Mammary epithelial cell (primary cell): ENCODE measurements at regions of chr16 and their contacts with region 1.

Region 1: DNA sequence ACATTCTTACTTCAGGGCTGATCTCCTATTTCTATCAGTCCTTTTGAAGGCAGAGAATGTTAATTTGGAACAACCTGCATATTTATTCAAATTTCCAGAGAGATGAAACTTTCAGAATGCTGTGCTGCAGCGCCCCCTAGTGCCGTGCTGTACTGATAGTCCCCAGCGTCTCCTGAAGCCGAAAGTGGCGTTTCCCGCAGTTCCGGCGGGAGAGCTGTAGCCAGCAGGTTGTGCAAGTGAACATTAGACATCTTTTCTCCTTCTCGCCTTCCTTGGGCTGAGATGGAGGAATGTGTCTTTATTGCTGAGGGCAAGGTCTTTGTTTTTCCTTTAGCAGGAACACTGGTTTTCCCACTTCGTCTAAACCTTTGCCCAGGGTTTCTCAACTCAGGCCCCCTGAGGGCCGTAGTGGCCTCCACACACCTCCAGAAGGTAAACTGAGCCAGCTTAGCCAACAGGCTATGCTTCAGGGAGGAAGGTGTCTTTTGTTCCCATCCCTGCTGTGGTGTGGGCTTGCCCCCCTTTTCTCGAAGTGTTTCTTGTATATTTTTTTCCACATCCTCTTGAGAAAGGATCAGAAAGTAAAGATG is 26.4 kb downstream of the USP10 start:
- DNase-seq: peak; percentile 70
- H3K4me3 ChIP-seq: peak overlapping the region in 1 of 3 experiments; percentile 3
- H3K27ac ChIP-seq: peak overlapping the region; percentile 50
- H3K4me1 ChIP-seq: peaks cover 31% of the 10 kb centered on the region
- H3K27me3 ChIP-seq: no peaks in the 10 kb centered on the region
- CTCF ChIP-seq: peak; percentile 91 to 92

Region 2: DNA sequence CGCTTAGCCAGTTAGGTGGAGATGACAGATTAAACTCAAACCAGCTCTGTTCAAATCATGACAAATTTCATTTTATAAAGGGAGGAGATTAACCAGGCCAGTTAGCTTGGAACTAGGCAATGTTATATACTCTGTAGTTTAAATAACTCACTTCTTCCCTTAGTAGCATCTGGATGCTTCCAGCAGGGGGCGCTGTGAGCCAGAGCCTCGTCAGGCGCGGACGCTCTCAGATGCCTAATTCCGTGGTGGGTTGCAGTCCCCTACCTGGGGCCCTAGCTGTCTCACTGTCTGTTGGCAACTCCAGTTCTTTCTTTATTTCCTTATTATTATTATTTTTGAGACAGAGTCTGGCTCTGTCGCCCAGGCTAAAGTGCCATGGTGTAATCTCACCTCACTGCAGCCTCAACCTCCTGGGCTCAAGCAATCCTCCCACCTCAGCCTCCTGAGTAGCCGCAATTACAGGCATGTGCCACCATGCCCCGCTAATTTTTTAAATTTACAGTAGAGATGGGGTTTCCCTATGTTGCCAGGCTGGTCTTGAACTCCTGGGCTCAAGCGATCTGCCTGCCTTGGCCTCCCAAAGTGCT is 448.8 kb before region 1 on chr16:
- CTCF ChIA-PET with region 1: no interaction called
- dilution Hi-C with region 1: no loop called
- in situ Hi-C with region 1: no loop called
- intact Hi-C with region 1: loop called (anchors 5 kb)
- DNase-seq: peak; percentile 8
- H3K4me3 ChIP-seq: no peak overlapping the region
- H3K27ac ChIP-seq: no peak overlapping the region
- H3K4me1 ChIP-seq: no peaks in the 10 kb centered on the region
- H3K27me3 ChIP-seq: no peaks in the 10 kb centered on the region
- CTCF ChIP-seq: peak; percentile 84 to 87

Region 3: GRCh38 chr16:84511180-84511824 is 214.9 kb before region 1 on chr16:
- CTCF ChIA-PET with region 1: no interaction called
- dilution Hi-C with region 1: no loop called
- in situ Hi-C with region 1: loop called (anchors 10 to 25 kb)
- intact Hi-C with region 1: loop called (anchors 1 kb)
- DNase-seq: peak; percentile 72
- H3K4me3 ChIP-seq: no peak overlapping the region
- H3K27ac ChIP-seq: no peak overlapping the region
- H3K4me1 ChIP-seq: peaks cover 4% of the 10 kb centered on the region
- H3K27me3 ChIP-seq: no peaks in the 10 kb centered on the region
- CTCF ChIP-seq: peak; percentile 90 to 94

Region 4: GRCh38 chr16:84647828-84648594 is 78.2 kb before region 1 on chr16 and contains the start of gene KLHL36:
- CTCF ChIA-PET with region 1: no interaction called
- dilution Hi-C with region 1: no loop called
- in situ Hi-C with region 1: no loop called
- intact Hi-C with region 1: no loop called
- DNase-seq: no peak
- H3K4me3 ChIP-seq: peak within 1 kb of the TSS; percentile 53 to 75 (median 62)
- H3K27ac ChIP-seq: peak within 1 kb of the TSS; percentile 43
- H3K4me1 ChIP-seq: peaks cover 46% of the 10 kb centered on the region
- H3K27me3 ChIP-seq: no peaks in the 10 kb centered on the region
- CTCF ChIP-seq: no peak
- total RNA-seq, gene KLHL36: 52.9 to 103 TPM

Region 5: DNA sequence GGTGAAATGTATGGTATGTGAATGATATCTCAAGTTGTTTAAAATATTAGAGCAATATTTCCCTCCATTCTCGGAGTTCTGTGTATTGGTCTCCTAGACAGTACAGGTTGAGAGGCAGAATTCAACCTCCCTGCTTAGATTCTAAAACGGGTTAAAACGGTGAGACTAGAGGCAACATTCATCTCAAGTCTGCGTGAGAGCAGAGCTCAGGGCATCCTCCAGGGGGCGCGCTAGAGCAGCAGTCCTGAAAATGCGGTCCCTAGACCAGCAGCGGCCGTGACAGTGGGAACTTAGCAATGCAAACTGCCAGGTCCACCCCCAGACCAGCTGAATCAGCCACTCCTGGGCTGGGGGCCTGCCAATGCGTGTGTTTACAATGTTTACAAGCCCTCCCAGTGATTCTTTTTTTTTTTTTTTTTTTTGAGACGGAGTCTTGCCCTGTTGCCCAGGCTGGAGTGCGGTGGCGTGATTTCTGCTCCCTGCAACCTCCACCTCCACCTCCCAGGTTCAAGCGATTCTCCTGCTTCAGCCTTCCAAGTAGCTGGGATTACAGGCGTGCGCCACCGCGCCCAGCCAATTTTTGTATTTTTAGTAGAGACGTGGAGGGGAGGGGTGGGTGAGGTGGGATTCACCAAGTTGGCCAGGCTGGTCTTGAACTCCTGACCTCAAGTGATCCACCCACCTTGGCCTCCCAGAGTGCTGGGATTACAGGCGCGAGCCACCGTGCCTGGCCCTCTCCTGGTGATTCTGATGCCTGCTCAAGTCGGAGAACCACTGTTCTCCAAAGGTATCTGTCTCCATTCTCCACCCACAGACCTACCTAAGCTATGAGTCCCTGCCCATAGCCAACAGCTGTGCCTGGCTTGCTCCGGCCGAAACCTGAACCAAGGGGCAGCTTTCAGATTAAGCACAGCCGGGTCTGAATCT is 53.6 kb before region 1 on chr16:
- CTCF ChIA-PET with region 1: interaction called, 3 read pairs
- dilution Hi-C with region 1: no loop called
- in situ Hi-C with region 1: no loop called
- intact Hi-C with region 1: loop called (anchors 1 kb)
- DNase-seq: peak; percentile 39
- H3K4me3 ChIP-seq: no peak overlapping the region
- H3K27ac ChIP-seq: no peak overlapping the region
- H3K4me1 ChIP-seq: no peaks in the 10 kb centered on the region
- H3K27me3 ChIP-seq: no peaks in the 10 kb centered on the region
- CTCF ChIP-seq: peak; percentile 97

Region 6: GRCh38 chr16:84683691-84684591 is 42.2 kb before region 1 on chr16:
- CTCF ChIA-PET with region 1: no interaction called
- dilution Hi-C with region 1: no loop called
- in situ Hi-C with region 1: loop called in 1 of 2 experiments (anchors 5 kb)
- intact Hi-C with region 1: no loop called
- DNase-seq: no peak
- H3K4me3 ChIP-seq: no peak overlapping the region
- H3K27ac ChIP-seq: no peak overlapping the region
- H3K4me1 ChIP-seq: peaks cover 2% of the 10 kb centered on the region
- H3K27me3 ChIP-seq: no peaks in the 10 kb centered on the region
- CTCF ChIP-seq: no peak

Region 7: GRCh38 chr16:85461814-85462713 is 735.9 kb after region 1 on chr16:
- CTCF ChIA-PET with region 1: no interaction called
- dilution Hi-C with region 1: no loop called
- in situ Hi-C with region 1: no loop called
- intact Hi-C with region 1: no loop called
- DNase-seq: no peak
- H3K4me3 ChIP-seq: no peak overlapping the region
- H3K27ac ChIP-seq: no peak overlapping the region
- H3K4me1 ChIP-seq: peaks cover 4% of the 10 kb centered on the region
- H3K27me3 ChIP-seq: peaks cover 18% of the 10 kb centered on the region
- CTCF ChIP-seq: no peak